ENCODE measurements at regions of chr10 and their contacts with region 1.

Region 1: DNA sequence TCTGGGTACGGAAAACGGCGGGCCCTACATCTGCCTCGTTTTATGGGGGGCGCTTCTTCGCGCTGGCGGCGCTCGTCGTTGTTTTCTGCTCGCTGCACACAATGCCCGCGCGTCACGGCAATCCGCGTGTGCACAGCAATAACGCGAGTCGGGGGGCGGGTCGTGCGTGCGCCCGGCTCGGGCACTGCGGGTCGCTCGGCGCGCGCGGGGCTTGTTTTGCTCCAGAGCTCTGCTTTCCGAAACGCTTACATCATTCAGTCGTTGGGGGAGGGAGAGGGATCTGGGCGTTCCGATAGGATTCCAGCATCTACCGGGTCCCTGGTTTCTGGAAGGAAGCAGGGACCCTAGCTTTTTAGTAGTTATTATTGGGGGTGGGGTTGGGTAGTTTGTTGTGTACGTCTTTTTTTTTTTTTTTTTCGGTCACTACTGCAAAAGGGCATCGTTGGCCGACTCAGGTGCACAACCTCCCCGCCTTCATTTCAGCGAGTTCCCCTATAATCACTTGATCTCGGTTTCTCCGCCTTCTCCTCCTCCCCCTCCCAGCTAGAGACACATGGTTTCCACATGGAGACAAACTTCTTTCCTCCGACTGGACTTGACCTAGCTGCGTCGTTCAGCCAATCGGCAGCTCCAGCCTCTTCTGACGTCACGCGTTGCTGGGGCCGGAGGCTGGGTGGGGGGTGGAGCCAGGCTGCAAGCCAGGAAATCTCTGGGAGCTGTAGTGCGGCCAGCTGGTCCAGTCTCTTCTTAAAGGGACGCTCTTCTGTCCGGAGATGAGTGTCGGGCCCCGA is 3.5 kb downstream of the MXI1 start:
- DNase-seq: peak; percentile 95
- ATAC-seq: peak; percentile 77
- H3K4me3 ChIP-seq: peak overlapping the region; percentile 69 to 90 (median 72)
- H3K27ac ChIP-seq: peak overlapping the region; percentile 70
- H3K4me1 ChIP-seq: peaks cover 54% of the 10 kb centered on the region
- H3K27me3 ChIP-seq: peaks cover 0 to 4% of the 10 kb centered on the region in 2 experiments; a peak in 1 of 5 replicates
- CTCF ChIP-seq: peak; percentile 13; the same call in 1 of the 2 replicates
- EP300 ChIP-seq: peak in 1 of 2 experiments; percentile 37; a peak in 1 of 4 replicates
- POLR2A ChIP-seq: peak in 1 of 2 experiments; percentile 52; a peak in 2 of 4 replicates
- RAD21 ChIP-seq: no peak

Region 2: DNA sequence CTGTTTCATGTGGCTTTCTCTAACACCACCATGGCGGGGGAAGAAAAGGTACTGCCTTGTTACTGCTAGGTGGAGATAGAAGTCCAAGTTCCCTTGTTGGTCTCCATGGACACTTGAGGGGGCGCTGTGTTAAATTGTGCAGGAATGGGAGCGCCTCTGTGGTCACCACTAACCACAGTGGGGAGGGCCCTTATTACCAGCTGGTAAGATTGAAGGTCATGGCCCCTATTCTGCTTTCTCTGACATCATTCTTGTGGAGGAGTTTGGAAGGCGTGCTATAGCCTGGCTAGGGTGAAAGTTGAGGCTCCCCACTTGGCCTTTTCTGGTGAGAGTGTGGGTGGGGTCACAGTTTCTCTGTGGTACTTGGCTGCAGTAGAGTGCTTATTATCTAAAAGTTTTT is 18.3 kb before region 1 on chr10:
- CTCF ChIA-PET with region 1: no interaction called
- POLR2A ChIA-PET with region 1: no interaction called
- in situ Hi-C with region 1: no loop called
- intact Hi-C with region 1: no loop called
- DNase-seq: no peak
- ATAC-seq: peak; percentile 47
- H3K4me3 ChIP-seq: no peak overlapping the region
- H3K27ac ChIP-seq: no peak overlapping the region
- H3K4me1 ChIP-seq: no peaks in the 10 kb centered on the region
- H3K27me3 ChIP-seq: peaks cover 0 to 1% of the 10 kb centered on the region in 2 experiments; a peak in 2 of 5 replicates
- CTCF ChIP-seq: peak; percentile 20; the same call in 1 of the 2 replicates
- EP300 ChIP-seq: no peak
- POLR2A ChIP-seq: no peak
- RAD21 ChIP-seq: no peak

Region 3: DNA sequence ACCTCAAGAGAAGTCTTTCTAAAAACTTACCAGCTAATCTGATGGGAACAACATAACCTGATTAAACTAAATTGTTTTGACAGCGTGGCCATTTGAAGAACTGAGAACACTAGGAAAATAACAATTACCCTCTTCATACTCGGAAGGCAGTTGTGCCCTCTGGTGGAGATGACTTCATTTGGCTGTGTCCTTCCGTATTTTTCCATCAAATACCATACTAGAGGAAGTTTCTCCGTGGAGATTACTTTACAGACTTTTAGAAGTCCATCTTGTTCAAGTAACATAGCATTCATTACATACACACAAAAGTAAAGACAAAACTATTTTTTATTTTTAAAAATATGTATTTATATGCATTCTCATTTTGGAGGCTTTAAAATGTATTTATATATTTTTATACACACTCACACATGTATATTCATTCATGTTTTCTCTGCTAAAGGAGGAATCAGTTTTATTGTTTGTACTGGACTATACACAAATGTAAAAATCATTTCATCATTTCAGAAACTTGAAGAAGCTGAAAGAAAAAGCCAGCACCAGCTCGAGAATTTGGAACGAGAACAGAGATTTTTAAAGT is 68.6 kb after region 1 on chr10:
- CTCF ChIA-PET with region 1: interaction called, 12 read pairs
- POLR2A ChIA-PET with region 1: no interaction called
- in situ Hi-C with region 1: no loop called
- intact Hi-C with region 1: loop called (anchors 1 kb)
- DNase-seq: peak; percentile 65
- ATAC-seq: peak; percentile 71
- H3K4me3 ChIP-seq: no peak overlapping the region
- H3K27ac ChIP-seq: no peak overlapping the region
- H3K4me1 ChIP-seq: peaks cover 9% of the 10 kb centered on the region
- H3K27me3 ChIP-seq: no peaks in the 10 kb centered on the region; a peak in 1 of 5 replicates
- CTCF ChIP-seq: peak; percentile 78
- EP300 ChIP-seq: no peak
- POLR2A ChIP-seq: no peak
- RAD21 ChIP-seq: peak; percentile 68; the same call in 1 of the 2 replicates

Region 4: DNA sequence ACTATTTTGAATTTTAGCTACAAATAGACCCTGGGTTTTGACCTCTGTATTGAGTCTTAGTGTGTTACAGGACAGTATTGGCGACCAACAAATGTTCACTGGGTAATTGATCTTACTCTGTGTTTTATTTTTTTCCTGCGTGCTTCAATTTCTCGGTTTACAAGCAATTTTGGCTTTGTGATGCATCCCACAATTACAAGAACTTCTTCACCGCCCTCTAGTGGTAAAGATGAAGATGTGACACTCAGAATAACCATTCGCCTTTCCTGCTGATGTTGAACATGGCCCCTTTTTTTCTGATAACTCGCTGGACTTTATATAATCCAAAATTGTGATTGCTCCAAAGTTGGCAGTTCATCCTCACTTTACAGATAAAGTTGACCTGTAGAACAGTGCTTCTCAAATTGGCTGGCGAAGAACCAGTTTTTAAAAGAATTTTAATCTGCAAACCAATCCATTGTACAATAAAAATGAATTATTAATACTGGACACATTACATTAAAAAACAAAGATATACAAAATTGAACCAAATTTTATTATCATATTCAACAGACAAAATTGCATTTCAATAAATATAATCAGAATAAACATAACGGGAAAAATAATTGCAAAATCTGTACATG is 336.4 kb after region 1 on chr10:
- CTCF ChIA-PET with region 1: no interaction called
- POLR2A ChIA-PET with region 1: no interaction called
- in situ Hi-C with region 1: no loop called
- intact Hi-C with region 1: no loop called
- DNase-seq: peak; percentile 54
- ATAC-seq: peak; percentile 60; the same call in 2 of the 3 replicates
- H3K4me3 ChIP-seq: no peak overlapping the region
- H3K27ac ChIP-seq: no peak overlapping the region
- H3K4me1 ChIP-seq: no peaks in the 10 kb centered on the region
- H3K27me3 ChIP-seq: peaks cover 0 to 3% of the 10 kb centered on the region in 2 experiments; a peak in 2 of 5 replicates
- CTCF ChIP-seq: peak; percentile 80
- EP300 ChIP-seq: no peak
- POLR2A ChIP-seq: no peak
- RAD21 ChIP-seq: peak; percentile 72